HEK293 (cell line): ENCODE measurements at regions of chr7 and their contacts with region 1.

Region 1: DNA sequence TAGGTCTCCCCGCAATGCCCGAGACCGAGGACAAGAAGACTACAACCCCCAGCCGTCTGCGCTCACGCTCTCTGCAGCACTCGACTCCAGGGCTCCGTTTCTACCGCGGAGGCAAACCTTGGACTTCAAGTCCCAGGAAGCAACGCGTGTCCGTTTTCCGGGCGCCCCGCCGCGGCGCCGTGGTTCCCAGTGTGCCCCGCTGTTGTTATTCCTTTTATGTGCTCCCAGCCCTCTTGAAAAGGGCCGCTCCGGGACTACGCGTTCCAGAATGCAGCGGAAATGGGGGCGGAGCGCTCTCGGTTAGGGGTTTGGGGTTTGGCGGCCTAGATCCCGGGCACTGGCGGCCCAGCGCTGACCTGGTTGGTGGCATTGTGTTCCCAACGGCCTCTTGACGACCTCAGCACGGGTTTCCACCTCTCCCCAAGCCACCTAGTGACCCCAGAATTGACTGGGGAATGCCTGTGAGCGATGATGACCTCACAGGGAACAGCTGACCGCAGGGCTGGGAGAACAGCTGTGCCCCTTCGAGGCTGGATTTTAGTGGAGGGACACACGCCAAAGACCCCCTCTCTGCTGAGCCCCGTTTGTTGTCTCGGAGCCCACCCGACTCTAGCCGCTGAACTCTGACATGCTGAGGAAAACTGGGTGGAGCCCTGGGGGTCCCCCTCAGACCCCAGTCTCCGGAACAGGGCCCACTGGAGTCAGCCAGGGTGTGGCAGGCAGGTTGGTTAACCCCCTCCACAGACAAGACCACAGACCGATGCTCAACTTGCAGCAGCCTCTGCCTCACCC is 488 bp upstream of the CDK5 start:
- H3K4me3 ChIP-seq: peak overlapping the region; percentile 49
- H3K27ac ChIP-seq: peak overlapping the region; percentile 48
- H3K4me1 ChIP-seq: no peaks in the 10 kb centered on the region; the same call in 1 of the 2 replicates
- CTCF ChIP-seq: no peak

Region 2: DNA sequence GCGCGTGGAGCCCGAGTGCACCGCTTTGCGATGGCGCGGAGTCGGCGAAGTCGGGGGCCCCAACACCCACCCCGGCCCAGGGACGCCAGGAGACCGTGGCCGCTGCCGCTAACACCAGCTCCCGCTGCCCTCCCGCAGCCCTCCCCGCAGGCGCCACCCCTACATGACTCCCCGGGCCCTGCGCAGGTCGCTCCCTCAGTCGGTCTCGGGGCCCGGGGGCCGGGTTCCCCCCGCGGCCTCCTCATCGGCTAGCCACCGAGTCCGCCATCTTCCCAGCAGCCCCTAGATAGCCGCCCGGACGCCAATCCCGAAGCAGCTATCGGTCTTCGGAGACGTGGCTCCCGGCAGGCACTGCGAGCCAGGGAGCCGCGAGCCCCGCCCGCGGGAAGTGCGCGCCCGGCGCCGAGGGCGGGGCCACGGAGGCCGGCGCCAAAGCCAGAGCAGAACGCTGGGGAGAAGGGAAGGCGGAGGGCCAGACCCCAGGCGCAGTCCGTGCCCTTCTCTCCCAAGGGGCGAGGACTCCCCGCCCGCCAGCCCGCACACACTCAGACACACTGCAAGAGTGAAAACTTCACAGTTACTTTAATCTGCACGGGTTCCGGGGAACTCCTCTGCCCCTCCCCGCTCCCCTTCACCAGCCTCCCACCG is 22.5 kb after region 1 on chr7 and contains the start of gene FASTK:
- CTCF ChIA-PET with region 1: interaction called, 6 read pairs
- POLR2A ChIA-PET with region 1: interaction called, 22 read pairs
- H3K4me3 ChIP-seq: peak within 1 kb of the TSS; percentile 89
- H3K27ac ChIP-seq: peak within 1 kb of the TSS; percentile 75
- H3K4me1 ChIP-seq: peaks cover 7% of the 10 kb centered on the region; the same call in 1 of the 2 replicates
- CTCF ChIP-seq: no peak